ENCODE measurements at regions of chr22 and their contacts with region 1.

Region 1: DNA sequence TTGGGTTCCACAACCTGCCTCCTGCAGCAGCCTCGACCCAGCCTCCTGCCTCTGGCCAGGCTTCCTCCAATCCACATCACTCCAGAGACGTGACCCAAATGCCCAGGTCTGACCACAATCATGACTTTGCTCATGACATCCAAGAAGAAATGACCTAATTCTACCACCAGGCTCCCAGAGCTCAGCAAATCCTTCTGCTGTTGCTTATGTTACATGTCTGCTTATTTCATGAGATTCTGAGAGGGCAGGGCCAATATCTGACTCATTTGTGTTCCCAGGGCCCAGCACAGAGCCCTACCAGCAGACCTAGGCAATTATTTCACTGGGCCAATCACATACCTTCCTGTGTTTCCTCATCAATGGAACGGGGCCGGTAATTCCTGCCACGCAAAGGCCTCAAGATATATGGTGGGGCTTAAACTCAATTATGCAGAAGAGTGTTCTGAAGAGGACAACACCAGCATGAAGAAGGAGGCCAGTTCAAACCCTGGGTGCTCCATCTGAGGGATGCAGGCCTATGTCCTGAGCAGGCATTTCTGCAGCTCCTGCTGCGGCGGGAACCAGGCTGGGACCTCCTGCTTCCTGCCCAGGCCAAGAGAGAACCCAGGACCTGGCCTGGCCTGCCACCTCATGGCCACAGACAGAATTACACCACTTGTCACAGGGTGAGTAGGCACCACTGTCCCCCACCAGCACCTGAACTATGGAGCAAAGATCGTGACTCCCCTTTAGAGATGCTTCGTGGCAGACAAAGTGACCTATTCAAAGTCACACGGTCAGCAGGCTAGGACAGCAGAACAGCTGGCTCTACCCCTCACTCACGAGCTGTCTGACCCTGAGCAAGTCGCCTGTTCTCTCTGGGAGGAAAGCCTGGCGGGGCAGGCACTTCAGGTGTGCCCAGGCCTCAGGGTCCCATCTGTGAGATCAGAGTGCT is 5.9 kb downstream of the CENPM start:
- DNase-seq: peak; percentile 91
- ATAC-seq: peak; percentile 63
- H3K4me3 Mint-ChIP-seq: peak overlapping the region; percentile 78
- H3K27ac Mint-ChIP-seq: peak overlapping the region; percentile 99
- H3K4me1 Mint-ChIP-seq: peaks cover 70% of the 10 kb centered on the region
- H3K27me3 Mint-ChIP-seq: no peaks in the 10 kb centered on the region

Region 2: GRCh38 chr22:41589391-41590241 is 351.5 kb before region 1 on chr22 and contains the start of gene PMM1:
- CTCF ChIA-PET with region 1: no interaction called
- POLR2A ChIA-PET with region 1: no interaction called
- intact Hi-C with region 1: loop called in 1 of 2 experiments (anchors 1 kb)
- DNase-seq: peak; percentile 100
- ATAC-seq: peak; percentile 99
- H3K4me3 Mint-ChIP-seq: peak within 1 kb of the TSS; percentile 88
- H3K27ac Mint-ChIP-seq: peak within 1 kb of the TSS; percentile 85
- H3K4me1 Mint-ChIP-seq: peaks cover 15% of the 10 kb centered on the region
- H3K27me3 Mint-ChIP-seq: no peaks in the 10 kb centered on the region
- total RNA-seq, gene PMM1: 30.4 to 37.4 TPM

Region 3: DNA sequence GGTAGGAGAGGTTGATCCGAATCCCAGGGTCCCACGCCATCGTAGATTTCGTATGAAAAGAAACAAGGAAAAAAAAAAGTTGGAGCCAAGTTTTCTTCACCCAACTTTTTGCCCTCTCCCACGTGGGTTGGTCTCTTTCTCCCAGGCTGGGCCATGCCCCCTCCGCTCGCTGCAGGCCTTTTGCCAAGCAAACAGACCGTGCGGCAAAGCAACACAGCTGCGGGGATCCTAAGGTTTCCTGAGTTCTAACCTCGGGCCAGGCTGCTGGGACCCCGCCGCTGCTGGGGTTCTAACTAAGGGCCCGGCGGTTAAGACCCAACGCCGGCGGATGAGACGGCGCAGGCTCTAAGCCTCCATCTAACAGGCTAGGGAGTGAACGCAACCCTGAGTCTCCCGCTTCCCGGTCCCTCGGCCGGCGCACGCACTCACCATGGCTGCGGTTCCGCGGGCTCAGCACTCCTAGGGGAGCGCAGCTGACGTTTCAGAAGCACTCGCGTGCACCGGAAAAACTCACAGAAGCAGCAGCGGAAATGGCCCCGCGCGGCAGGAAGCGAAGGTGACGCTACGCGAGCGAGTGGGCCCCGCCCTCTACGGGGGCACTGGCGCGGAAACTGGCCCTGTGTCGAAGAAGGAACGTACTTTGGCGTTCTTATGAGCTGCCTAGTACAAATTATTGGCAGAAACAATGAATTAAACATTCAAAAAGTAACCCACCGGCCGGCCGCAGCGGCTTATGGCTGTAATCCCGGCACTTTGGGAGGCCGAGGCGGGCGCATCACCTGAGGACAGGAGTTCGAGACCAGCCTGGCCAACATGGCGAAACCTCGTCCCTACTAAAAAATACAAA is 252.5 kb before region 1 on chr22 and contains the start of gene SNU13:
- CTCF ChIA-PET with region 1: interaction called, 4 read pairs
- POLR2A ChIA-PET with region 1: interaction called, 11 read pairs
- intact Hi-C with region 1: loop called in 1 of 2 experiments (anchors 1 kb)
- DNase-seq: peak; percentile 96
- ATAC-seq: peak; percentile 93
- H3K4me3 Mint-ChIP-seq: peak within 1 kb of the TSS; percentile 98
- H3K27ac Mint-ChIP-seq: peak within 1 kb of the TSS; percentile 98
- H3K4me1 Mint-ChIP-seq: peaks cover 34% of the 10 kb centered on the region
- H3K27me3 Mint-ChIP-seq: no peaks in the 10 kb centered on the region
- total RNA-seq, gene SNU13: 275 to 281 TPM

Region 4: GRCh38 chr22:41780746-41781505 is 160.2 kb before region 1 on chr22:
- CTCF ChIA-PET with region 1: interaction called, 9 read pairs
- POLR2A ChIA-PET with region 1: interaction called, 4 read pairs
- intact Hi-C with region 1: loop called in 1 of 2 experiments (anchors 1 kb)
- DNase-seq: peak; percentile 95
- ATAC-seq: peak; percentile 94
- H3K4me3 Mint-ChIP-seq: peak overlapping the region; percentile 81
- H3K27ac Mint-ChIP-seq: peak overlapping the region; percentile 98
- H3K4me1 Mint-ChIP-seq: peaks cover 39% of the 10 kb centered on the region
- H3K27me3 Mint-ChIP-seq: no peaks in the 10 kb centered on the region

Region 5: GRCh38 chr22:41832553-41833368 is 108.3 kb before region 1 on chr22 and contains the start of gene SREBF2:
- CTCF ChIA-PET with region 1: interaction called, 6 read pairs
- POLR2A ChIA-PET with region 1: interaction called, 15 read pairs
- intact Hi-C with region 1: loop called (anchors 1 kb)
- DNase-seq: peak; percentile 100
- ATAC-seq: peak; percentile 94
- H3K4me3 Mint-ChIP-seq: peak within 1 kb of the TSS; percentile 96
- H3K27ac Mint-ChIP-seq: peak within 1 kb of the TSS; percentile 99
- H3K4me1 Mint-ChIP-seq: peaks cover 45% of the 10 kb centered on the region
- H3K27me3 Mint-ChIP-seq: no peaks in the 10 kb centered on the region
- total RNA-seq, gene SREBF2: 101 to 105 TPM

Region 6: GRCh38 chr22:41873391-41873790 is 67.7 kb before region 1 on chr22:
- CTCF ChIA-PET with region 1: interaction called, 7 read pairs
- POLR2A ChIA-PET with region 1: interaction called, 9 read pairs
- intact Hi-C with region 1: loop called (anchors 1 to 2 kb)
- DNase-seq: peak; percentile 70
- ATAC-seq: peak; percentile 86
- H3K4me3 Mint-ChIP-seq: peak overlapping the region; percentile 66
- H3K27ac Mint-ChIP-seq: peak overlapping the region; percentile 87
- H3K4me1 Mint-ChIP-seq: peaks cover 73% of the 10 kb centered on the region
- H3K27me3 Mint-ChIP-seq: no peaks in the 10 kb centered on the region

Region 7: GRCh38 chr22:42261296-42261695 is 320.2 kb after region 1 on chr22:
- CTCF ChIA-PET with region 1: no interaction called
- POLR2A ChIA-PET with region 1: no interaction called
- intact Hi-C with region 1: no loop called
- DNase-seq: no peak
- ATAC-seq: no peak
- H3K4me3 Mint-ChIP-seq: no peak overlapping the region
- H3K27ac Mint-ChIP-seq: no peak overlapping the region
- H3K4me1 Mint-ChIP-seq: peaks cover 96% of the 10 kb centered on the region
- H3K27me3 Mint-ChIP-seq: no peaks in the 10 kb centered on the region

Measured in activated CD4-positive, alpha-beta T cell treated with anti-CD3 and anti-CD28 coated beads for 36 hours (primary cell).